RWPE1 (cell line): ENCODE measurements at regions of chr15 and their contacts with region 1.

Region 1: DNA sequence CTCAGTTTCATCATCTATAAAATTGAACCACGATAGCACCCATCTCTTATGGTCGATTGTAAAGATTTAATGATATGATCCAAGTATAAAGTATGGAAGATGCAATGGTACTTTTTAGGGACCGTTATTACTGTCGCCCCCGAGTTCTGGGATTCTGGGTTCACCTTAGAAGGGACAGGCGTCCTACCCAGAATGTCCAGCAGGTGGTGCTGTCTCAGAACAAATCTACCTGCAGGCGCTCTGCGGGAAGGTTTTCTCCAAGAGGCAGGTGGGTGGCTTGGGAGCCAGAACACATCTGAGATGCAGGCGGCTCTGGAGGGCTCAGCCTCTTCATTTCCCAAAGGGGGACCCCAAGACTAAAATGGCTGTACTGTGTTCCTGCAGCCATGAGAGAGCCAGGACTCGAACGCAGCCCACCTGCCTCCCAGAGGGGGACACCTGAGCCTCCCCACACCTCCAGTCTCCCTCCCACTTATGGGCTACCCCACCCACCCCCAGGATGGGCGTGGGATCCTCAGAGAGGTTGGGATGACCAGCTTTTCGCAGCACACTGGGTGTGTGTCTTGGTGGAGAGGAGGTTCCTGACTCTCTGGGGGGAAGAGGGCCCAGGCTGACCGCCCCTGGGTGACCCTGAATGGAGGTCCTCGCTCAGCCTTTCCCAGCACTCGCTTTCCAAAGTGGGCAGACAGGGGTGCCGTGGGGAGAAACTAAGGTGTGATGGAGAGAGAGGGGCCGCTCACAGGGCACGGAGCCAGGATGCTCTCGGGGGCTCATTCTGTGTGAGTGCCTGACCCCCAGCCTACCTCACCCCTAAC is 28.1 kb upstream of the CORO2B start:
- DNase-seq: peak; percentile 68
- H3K27ac ChIP-seq: no peak overlapping the region
- CTCF ChIP-seq: peak; percentile 96

Region 2: DNA sequence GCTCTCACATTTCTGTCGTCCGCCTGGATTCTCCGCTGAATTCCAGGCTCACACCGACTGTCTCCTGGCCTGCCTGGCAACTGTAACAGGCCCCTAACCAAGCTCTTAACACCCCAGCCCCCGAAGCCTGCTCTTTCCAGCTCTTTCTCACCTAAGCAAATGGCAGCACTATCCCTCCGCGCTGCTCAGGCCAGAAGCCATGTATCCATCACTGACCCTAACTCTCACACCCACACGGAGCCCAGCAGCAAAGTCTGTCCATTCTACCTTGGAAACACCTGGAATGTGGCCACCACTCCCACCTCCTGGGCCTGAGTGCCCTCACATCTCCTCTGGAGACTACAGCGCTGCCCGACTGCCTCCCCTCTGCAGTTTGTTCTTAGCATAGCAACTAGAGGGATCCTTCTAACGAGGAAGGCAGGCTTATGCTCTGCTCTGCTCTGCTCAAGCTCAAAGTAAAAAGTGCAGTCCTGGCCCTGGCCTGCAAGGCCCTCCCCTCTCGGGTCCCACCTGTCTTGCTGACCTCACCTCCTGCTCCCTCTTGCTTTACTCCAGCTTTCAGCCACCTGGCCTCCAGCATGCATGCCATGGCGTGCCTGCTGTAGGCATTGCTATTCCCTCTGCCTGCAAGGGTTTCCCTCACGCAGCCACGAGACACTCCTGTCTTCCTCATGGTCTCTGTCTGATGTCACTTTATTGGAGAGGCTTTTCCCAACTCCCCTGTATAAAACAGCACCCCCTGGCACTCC is 245.9 kb before region 1 on chr15:
- CTCF ChIA-PET with region 1: interaction called, 11 read pairs
- POLR2A ChIA-PET with region 1: no interaction called
- DNase-seq: peak; percentile 38
- H3K27ac ChIP-seq: peak overlapping the region; percentile 67
- CTCF ChIP-seq: no peak

Region 3: GRCh38 chr15:68672781-68673205 is 122.1 kb after region 1 on chr15:
- CTCF ChIA-PET with region 1: interaction called, 90 read pairs
- POLR2A ChIA-PET with region 1: no interaction called
- DNase-seq: no peak
- H3K27ac ChIP-seq: no peak overlapping the region
- CTCF ChIP-seq: peak; percentile 11; the same call in 1 of the 2 replicates

Region 4: DNA sequence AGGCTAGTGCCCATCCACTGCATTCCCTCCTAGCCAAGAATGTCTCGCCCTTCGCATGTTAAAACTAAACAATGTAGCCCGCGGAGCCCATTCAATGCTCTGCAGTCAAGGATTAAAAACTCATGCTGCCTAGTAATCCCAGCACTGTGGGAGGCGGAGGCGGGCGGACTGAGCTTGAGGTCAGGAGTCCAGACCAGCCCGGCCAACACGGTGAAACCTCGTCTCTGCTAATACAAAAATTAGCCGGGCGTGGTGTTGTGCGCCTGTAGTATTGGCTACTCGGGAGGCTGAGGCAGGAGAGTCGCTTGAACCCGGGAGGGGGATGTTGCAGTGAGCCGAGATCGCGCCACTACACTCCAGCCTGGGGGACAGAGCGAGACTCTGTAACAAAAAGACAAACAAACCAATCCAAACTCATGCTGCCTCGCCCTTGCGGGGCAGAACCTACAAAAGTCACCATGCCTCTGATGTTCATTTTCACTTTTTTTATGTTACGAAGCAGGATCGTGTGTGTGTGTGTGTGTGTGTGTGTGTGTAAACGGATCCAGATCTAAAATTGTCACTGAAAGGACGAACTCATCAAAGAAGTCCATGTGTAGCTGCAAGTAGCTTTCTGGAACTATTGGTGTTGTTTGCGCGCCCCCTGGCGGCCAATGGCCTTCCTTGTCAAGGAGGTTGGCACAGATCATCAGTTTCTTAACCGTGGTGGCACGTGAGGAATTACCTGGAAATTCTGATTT is 324.9 kb after region 1 on chr15:
- CTCF ChIA-PET with region 1: interaction called, 13 read pairs
- POLR2A ChIA-PET with region 1: interaction called, 4 read pairs
- DNase-seq: peak; percentile 83
- H3K27ac ChIP-seq: no peak overlapping the region
- CTCF ChIP-seq: peak; percentile 92

Region 5: GRCh38 chr15:68924866-68925560 is 374.3 kb after region 1 on chr15:
- CTCF ChIA-PET with region 1: interaction called, 13 read pairs
- POLR2A ChIA-PET with region 1: no interaction called
- DNase-seq: peak; percentile 87
- H3K27ac ChIP-seq: no peak overlapping the region
- CTCF ChIP-seq: peak; percentile 95